Sigmoid colon (tissue), 7 donors: ENCODE measurements at regions of chr6 and their contacts with region 1.

Region 1: GRCh38 chr6:36623547-36624459 is 29.6 kb downstream of the SRSF3 start:
- DNase-seq: peak; percentile 95
- H3K4me3 ChIP-seq: no peak overlapping the region
- H3K27ac ChIP-seq: peak overlapping the region in 1 of 4 donors; percentile 49
- H3K4me1 ChIP-seq: peaks cover 0 to 35% (median 28%) of the 10 kb centered on the region in 4 donors
- H3K27me3 ChIP-seq: no peaks in the 10 kb centered on the region
- CTCF ChIP-seq: peak; percentile 84 to 96 (median 90)
- EP300 ChIP-seq: no peak
- POLR2A ChIP-seq: peak in 1 of 2 donors; percentile 29

Region 2: GRCh38 chr6:36559011-36559793 is 64.6 kb before region 1 on chr6:
- intact Hi-C with region 1: no loop called
- DNase-seq: no peak
- H3K4me3 ChIP-seq: no peak overlapping the region
- H3K27ac ChIP-seq: no peak overlapping the region
- H3K4me1 ChIP-seq: peaks cover 0 to 7% (median 5%) of the 10 kb centered on the region in 4 donors
- H3K27me3 ChIP-seq: no peaks in the 10 kb centered on the region
- CTCF ChIP-seq: no peak
- EP300 ChIP-seq: no peak
- POLR2A ChIP-seq: no peak

Region 3: DNA sequence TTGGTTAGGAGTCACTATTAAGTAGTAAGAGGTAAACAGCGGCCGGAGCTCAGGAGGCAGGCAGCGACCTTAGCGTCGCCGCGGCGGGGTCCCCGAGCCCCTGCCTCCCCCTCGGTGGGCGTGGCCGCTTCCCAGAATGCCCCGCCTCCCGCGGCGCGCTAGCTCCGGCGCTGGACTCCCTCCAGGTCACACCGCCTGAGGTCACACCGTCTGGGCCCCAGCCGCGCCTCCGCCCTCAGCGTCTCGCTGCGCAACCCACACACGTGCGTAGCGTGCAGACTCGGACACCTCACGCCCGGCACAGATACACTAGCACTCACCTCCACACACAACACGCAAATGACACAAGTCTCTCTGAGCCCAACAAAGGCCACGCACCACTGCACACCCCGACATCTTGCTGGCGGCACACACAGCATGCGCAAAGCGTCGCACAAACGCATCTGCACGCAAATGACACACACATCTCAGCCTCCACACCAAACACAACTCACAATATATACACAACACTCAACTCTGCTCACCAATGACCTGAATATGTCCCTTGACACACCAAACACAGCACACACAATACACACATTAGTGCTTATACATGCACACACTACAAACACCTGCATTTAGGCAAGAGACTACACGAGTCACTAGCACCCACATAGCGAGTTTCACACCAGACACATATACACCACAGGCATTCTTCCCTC is 37.1 kb after region 1 on chr6:
- intact Hi-C with region 1: loop called (anchors 2 kb)
- DNase-seq: peak; percentile 84
- H3K4me3 ChIP-seq: peak overlapping the region in 2 of 4 donors; percentile 8 to 12
- H3K27ac ChIP-seq: peak overlapping the region in 3 of 4 donors; percentile 56 to 72 (median 58)
- H3K4me1 ChIP-seq: peaks cover 0 to 48% (median 39%) of the 10 kb centered on the region in 4 donors
- H3K27me3 ChIP-seq: no peaks in the 10 kb centered on the region
- CTCF ChIP-seq: no peak
- EP300 ChIP-seq: no peak
- POLR2A ChIP-seq: no peak

Region 4: GRCh38 chr6:36735110-36736071 is 111.6 kb after region 1 on chr6:
- intact Hi-C with region 1: loop called (anchors 5 kb)
- DNase-seq: peak; percentile 94
- H3K4me3 ChIP-seq: peak overlapping the region; percentile 2 to 34 (median 24)
- H3K27ac ChIP-seq: peak overlapping the region; percentile 76 to 89 (median 81)
- H3K4me1 ChIP-seq: peaks cover 0 to 24% (median 20%) of the 10 kb centered on the region in 4 donors
- H3K27me3 ChIP-seq: no peaks in the 10 kb centered on the region
- CTCF ChIP-seq: peak in 1 of 4 experiments; percentile 8
- EP300 ChIP-seq: peak in 3 of 4 donors; percentile 48 to 85 (median 80)
- POLR2A ChIP-seq: no peak

Region 5: GRCh38 chr6:36759148-36759759 is 135.5 kb after region 1 on chr6:
- intact Hi-C with region 1: loop called (anchors 2 kb)
- DNase-seq: peak; percentile 92
- H3K4me3 ChIP-seq: no peak overlapping the region
- H3K27ac ChIP-seq: no peak overlapping the region
- H3K4me1 ChIP-seq: peaks cover 0 to 8% (median 6%) of the 10 kb centered on the region in 4 donors
- H3K27me3 ChIP-seq: no peaks in the 10 kb centered on the region
- CTCF ChIP-seq: peak; percentile 88 to 98 (median 94)
- EP300 ChIP-seq: no peak
- POLR2A ChIP-seq: no peak

Region 6: DNA sequence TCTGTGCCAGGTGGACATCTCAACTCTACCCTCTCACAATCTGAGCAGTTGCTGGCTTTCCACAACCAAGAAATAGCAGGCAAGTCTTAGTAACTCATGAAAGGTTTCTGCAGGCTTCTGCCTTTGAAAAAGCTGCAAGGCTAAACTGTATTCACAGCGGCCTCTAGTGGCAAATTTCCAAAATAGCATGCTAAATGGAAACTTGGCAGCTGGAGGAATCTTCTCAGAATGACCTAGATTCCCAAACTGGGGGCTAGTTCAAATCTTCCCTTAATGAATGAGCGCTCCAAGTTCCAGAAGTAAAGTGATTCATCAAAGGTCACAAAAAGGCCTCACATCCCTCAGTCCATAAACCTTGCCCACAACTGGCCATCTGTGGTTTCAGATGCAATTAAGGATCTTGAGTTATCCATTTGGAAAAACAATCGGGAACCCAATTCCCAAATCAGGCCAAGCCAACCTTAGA is 227.4 kb after region 1 on chr6:
- intact Hi-C with region 1: loop called (anchors 10 kb)
- DNase-seq: peak; percentile 87
- H3K4me3 ChIP-seq: no peak overlapping the region
- H3K27ac ChIP-seq: peak overlapping the region in 2 of 4 donors; percentile 53 to 70
- H3K4me1 ChIP-seq: peaks cover 0 to 34% (median 13%) of the 10 kb centered on the region in 4 donors
- H3K27me3 ChIP-seq: no peaks in the 10 kb centered on the region
- CTCF ChIP-seq: peak; percentile 21 to 61 (median 44)
- EP300 ChIP-seq: no peak
- POLR2A ChIP-seq: no peak

Region 7: GRCh38 chr6:36985808-36986703 is 362.3 kb after region 1 on chr6 and contains the start of gene MTCH1:
- intact Hi-C with region 1: no loop called
- DNase-seq: peak; percentile 97
- H3K4me3 ChIP-seq: peak within 1 kb of the TSS; percentile 76 to 100 (median 94)
- H3K27ac ChIP-seq: peak within 1 kb of the TSS; percentile 95 to 99 (median 98)
- H3K4me1 ChIP-seq: peaks cover 0 to 55% (median 50%) of the 10 kb centered on the region in 4 donors
- H3K27me3 ChIP-seq: no peaks in the 10 kb centered on the region
- CTCF ChIP-seq: no peak
- EP300 ChIP-seq: no peak
- POLR2A ChIP-seq: peak; percentile 76 to 78
- total RNA-seq, gene MTCH1: 163 to 198 (median 195) TPM